ENCODE measurements at regions of chr12 and their contacts with region 1.

Region 1: GRCh38 chr12:130639476-130640424 is 76.3 kb downstream of the RIMBP2 start:
- DNase-seq: peak in 1 of 2 donors; percentile 15
- H3K4me3 ChIP-seq: no peak overlapping the region
- H3K27ac ChIP-seq: no peak overlapping the region
- H3K4me1 ChIP-seq: no peaks in the 10 kb centered on the region
- H3K27me3 ChIP-seq: no peaks in the 10 kb centered on the region
- CTCF ChIP-seq: no peak
- POLR2A ChIP-seq: no peak

Region 2: DNA sequence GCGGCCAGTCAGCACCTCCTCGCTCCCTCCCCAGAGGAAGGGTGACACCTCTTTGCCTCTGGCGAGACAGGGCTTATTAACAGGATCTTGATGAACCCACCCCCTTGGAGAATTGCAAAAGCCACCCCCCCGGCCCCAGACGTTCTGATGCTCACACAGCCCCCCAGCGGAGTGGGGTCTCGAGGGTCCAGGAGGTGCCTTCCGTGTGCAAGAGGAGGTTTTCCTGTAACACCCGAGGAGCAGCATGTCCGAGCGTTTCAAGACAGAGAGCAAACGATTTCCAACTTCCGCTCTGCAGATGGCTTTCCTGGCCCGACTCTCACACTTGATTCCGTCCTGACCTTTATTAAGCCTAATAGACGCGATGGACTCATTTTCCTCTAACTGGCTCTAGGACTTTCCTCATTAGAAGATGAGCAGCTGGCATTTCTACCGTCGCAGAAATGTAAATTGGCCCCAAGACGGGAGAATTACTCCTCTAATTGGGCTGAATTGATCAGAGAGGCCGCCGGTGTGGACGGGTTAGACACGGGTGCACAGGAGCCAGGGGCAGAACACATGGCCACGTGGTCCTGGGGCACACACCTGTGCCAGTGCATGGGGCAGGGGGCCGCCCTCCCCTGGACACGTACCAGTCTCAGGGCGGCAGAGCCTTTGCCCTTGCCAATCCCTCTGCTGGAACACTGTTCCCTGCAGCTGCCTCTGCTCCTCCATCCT is 1588.9 kb after region 1 on chr12:
- intact Hi-C with region 1: loop called (anchors 5 kb)
- DNase-seq: no peak
- H3K4me3 ChIP-seq: no peak overlapping the region
- H3K27ac ChIP-seq: no peak overlapping the region
- H3K4me1 ChIP-seq: no peaks in the 10 kb centered on the region
- H3K27me3 ChIP-seq: peaks cover 0 to 50% of the 10 kb centered on the region in 2 donors
- CTCF ChIP-seq: no peak
- POLR2A ChIP-seq: no peak